HCT116 (cell line): ENCODE measurements at regions of chrX and their contacts with region 1.

Region 1: DNA sequence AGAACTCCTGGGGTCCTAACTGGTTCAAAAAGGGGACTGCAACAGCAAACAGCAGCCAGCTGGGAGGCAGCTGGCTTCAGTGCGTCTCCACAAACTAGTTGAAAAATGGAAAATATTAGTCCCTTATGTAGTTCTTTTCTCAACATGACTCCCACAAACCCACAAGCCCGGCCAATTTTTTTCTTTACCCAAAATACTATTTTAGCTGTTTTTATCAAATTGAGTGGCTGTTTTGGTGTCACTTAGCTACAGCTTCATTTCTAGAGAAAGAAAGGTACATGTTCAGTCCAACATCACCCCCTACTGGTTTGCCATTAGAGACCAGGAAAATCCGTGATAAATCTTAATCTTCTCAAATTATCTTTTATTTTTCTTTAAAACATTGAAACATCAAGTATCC is 97.2 kb downstream of the GUCY2F start:
- DNase-seq: no peak
- ATAC-seq: no peak
- H3K4me3 ChIP-seq: no peak overlapping the region
- H3K27ac ChIP-seq: no peak overlapping the region
- H3K4me1 ChIP-seq: no peaks in the 10 kb centered on the region
- H3K27me3 ChIP-seq: no peaks in the 10 kb centered on the region
- CTCF ChIP-seq: peak; percentile 28 to 52 (median 38); a peak in 3 of 6 replicates
- POLR2A ChIP-seq: no peak
- RAD21 ChIP-seq: peak; percentile 73

Region 2: GRCh38 chrX:108584617-108585211 is 800.0 kb before region 1 on chrX:
- CTCF ChIA-PET with region 1: no interaction called
- POLR2A ChIA-PET with region 1: no interaction called
- RAD21 ChIA-PET with region 1: no interaction called
- intact Hi-C with region 1: loop called (anchors 2 kb)
- DNase-seq: peak; percentile 4
- ATAC-seq: no peak
- H3K4me3 ChIP-seq: no peak overlapping the region
- H3K27ac ChIP-seq: no peak overlapping the region
- H3K4me1 ChIP-seq: no peaks in the 10 kb centered on the region
- H3K27me3 ChIP-seq: no peaks in the 10 kb centered on the region
- CTCF ChIP-seq: peak; percentile 22 to 50 (median 40); a peak in 4 of 6 replicates
- POLR2A ChIP-seq: no peak
- RAD21 ChIP-seq: peak; percentile 26; the same call in 1 of the 2 replicates

Region 3: GRCh38 chrX:108699368-108699767 is 685.3 kb before region 1 on chrX:
- CTCF ChIA-PET with region 1: interaction called, 49 read pairs
- POLR2A ChIA-PET with region 1: no interaction called
- RAD21 ChIA-PET with region 1: interaction called, 3 to 6 read pairs
- intact Hi-C with region 1: loop called (anchors 1 kb)
- DNase-seq: peak; percentile 16
- ATAC-seq: peak; percentile 59; the same call in 1 of the 2 replicates
- H3K4me3 ChIP-seq: no peak overlapping the region
- H3K27ac ChIP-seq: no peak overlapping the region
- H3K4me1 ChIP-seq: no peaks in the 10 kb centered on the region
- H3K27me3 ChIP-seq: no peaks in the 10 kb centered on the region
- CTCF ChIP-seq: peak in 2 of 3 experiments; percentile 27 to 51; a peak in 3 of 6 replicates
- POLR2A ChIP-seq: no peak
- RAD21 ChIP-seq: peak; percentile 54

Region 4: GRCh38 chrX:109049902-109050301 is 334.8 kb before region 1 on chrX:
- CTCF ChIA-PET with region 1: interaction called, 9 read pairs
- POLR2A ChIA-PET with region 1: no interaction called
- RAD21 ChIA-PET with region 1: no interaction called
- intact Hi-C with region 1: loop called (anchors 2 kb)
- DNase-seq: no peak
- ATAC-seq: 0 out of 2 replicates have a peak, but pooled peaks have one; percentile 55
- H3K4me3 ChIP-seq: no peak overlapping the region
- H3K27ac ChIP-seq: no peak overlapping the region
- H3K4me1 ChIP-seq: no peaks in the 10 kb centered on the region
- H3K27me3 ChIP-seq: no peaks in the 10 kb centered on the region
- CTCF ChIP-seq: peak; percentile 30 to 56 (median 38); a peak in 4 of 6 replicates
- POLR2A ChIP-seq: no peak
- RAD21 ChIP-seq: peak; percentile 49

Region 5: GRCh38 chrX:109464231-109464630 is 79.5 kb after region 1 on chrX:
- CTCF ChIA-PET with region 1: no interaction called
- POLR2A ChIA-PET with region 1: no interaction called
- RAD21 ChIA-PET with region 1: no interaction called
- intact Hi-C with region 1: no loop called
- DNase-seq: no peak
- ATAC-seq: no peak
- H3K4me3 ChIP-seq: no peak overlapping the region
- H3K27ac ChIP-seq: no peak overlapping the region
- H3K4me1 ChIP-seq: no peaks in the 10 kb centered on the region
- H3K27me3 ChIP-seq: no peaks in the 10 kb centered on the region
- CTCF ChIP-seq: no peak
- POLR2A ChIP-seq: no peak
- RAD21 ChIP-seq: no peak